Calu3 (cell line): ENCODE measurements at regions of chr1 and their contacts with region 1.

Region 1: DNA sequence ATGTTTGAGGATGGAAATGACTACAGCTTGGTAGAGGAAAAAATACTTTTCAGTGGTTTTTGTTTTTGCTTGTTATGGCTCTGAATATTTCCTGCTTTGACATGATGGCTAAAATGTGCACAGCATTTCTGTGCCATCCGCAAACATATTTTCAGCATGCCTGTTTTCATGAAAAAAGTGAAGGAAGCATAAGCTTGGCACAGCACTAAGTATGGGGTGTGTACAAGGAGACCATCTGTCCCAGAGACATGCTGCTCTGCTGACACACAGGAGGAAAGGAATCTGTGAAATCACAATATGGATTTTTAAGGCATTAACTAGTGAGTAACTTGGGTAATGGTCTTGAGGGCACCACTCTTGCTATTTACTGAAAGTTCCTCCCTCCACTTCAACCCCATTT is 595.5 kb downstream of the RWDD3 start:
- DNase-seq: no peak
- H3K4me3 Mint-ChIP-seq: no peak overlapping the region
- H3K27ac Mint-ChIP-seq: no peak overlapping the region
- H3K4me1 Mint-ChIP-seq: no peaks in the 10 kb centered on the region
- H3K27me3 Mint-ChIP-seq: no peaks in the 10 kb centered on the region
- CTCF ChIP-seq: no peak

Region 2: GRCh38 chr1:95352767-95353166 is 476.8 kb before region 1 on chr1:
- CTCF ChIA-PET with region 1: no interaction called
- intact Hi-C with region 1: no loop called
- DNase-seq: peak; percentile 59
- H3K4me3 Mint-ChIP-seq: no peak overlapping the region
- H3K27ac Mint-ChIP-seq: no peak overlapping the region
- H3K4me1 Mint-ChIP-seq: peaks cover 19% of the 10 kb centered on the region
- H3K27me3 Mint-ChIP-seq: peaks cover 21% of the 10 kb centered on the region
- CTCF ChIP-seq: no peak

Region 3: DNA sequence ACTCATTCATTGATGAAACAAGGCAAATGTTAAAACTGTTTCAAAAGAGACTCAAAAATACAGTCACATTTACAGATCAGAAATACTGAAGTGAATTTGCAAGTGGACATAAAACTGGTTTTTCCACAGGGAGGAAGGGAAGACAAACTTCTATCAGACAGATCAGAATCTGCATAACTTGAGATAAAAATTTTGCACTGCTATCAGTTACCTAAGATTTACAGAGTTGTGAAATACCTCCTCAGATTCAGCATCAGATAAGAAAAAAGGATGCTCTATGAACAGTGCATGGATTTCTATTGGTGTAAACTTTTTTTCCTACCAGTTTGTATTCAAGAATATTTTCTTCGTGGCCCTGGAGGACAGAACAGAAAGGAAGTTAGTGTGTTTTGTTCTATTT is 20.2 kb before region 1 on chr1:
- CTCF ChIA-PET with region 1: no interaction called
- intact Hi-C with region 1: no loop called
- DNase-seq: no peak
- H3K4me3 Mint-ChIP-seq: no peak overlapping the region
- H3K27ac Mint-ChIP-seq: no peak overlapping the region
- H3K4me1 Mint-ChIP-seq: no peaks in the 10 kb centered on the region
- H3K27me3 Mint-ChIP-seq: no peaks in the 10 kb centered on the region
- CTCF ChIP-seq: no peak

Region 4: GRCh38 chr1:95876276-95876675 is 46.7 kb after region 1 on chr1:
- CTCF ChIA-PET with region 1: no interaction called
- intact Hi-C with region 1: loop called (anchors 5 kb)
- DNase-seq: no peak
- H3K4me3 Mint-ChIP-seq: no peak overlapping the region
- H3K27ac Mint-ChIP-seq: no peak overlapping the region
- H3K4me1 Mint-ChIP-seq: no peaks in the 10 kb centered on the region
- H3K27me3 Mint-ChIP-seq: no peaks in the 10 kb centered on the region
- CTCF ChIP-seq: no peak

Region 5: GRCh38 chr1:96559707-96560596 is 730.4 kb after region 1 on chr1:
- CTCF ChIA-PET with region 1: no interaction called
- intact Hi-C with region 1: no loop called
- DNase-seq: peak; percentile 61
- H3K4me3 Mint-ChIP-seq: peak overlapping the region; percentile 22
- H3K27ac Mint-ChIP-seq: peak overlapping the region; percentile 80
- H3K4me1 Mint-ChIP-seq: peaks cover 17% of the 10 kb centered on the region
- H3K27me3 Mint-ChIP-seq: no peaks in the 10 kb centered on the region
- CTCF ChIP-seq: no peak